Ascending aorta (tissue), 2 donors: ENCODE measurements at regions of chr6 and their contacts with region 1.

Region 1: DNA sequence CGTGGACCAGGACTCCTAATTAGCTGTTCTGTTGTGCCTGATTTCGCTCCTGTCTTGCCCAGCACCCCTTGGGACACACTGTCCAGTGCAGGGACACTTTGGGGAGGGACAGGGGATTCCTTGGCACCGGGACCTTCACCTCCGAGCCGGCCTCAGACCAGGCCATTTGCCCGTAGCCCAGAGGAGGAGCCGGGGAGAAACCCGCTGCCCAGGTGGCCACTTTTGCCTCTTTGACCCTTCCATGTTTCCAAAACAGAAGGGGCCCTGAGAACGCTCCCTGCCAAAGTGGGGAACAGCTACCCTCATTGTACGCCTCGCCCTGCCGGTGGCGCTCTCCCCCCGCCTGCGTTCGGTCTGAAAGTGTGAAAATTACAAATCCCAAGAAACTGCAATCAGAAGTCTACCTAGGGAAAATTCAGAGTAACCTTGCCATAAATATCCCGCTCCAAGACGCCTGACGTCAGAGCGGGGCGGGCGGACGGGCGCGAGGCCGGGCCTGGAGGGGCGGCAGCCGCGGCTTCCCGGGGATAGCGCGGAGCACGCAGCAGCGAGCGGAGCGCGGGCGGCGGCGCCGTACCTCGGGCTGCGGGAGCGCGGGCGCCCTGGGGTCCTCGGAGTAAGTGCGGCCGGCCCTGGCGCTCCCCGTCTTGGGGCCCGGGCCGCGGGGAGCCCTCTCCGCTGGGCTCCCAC is at the start of gene DAAM2:
- DNase-seq: peak; percentile 28 to 84
- H3K4me3 ChIP-seq: peak within 1 kb of the TSS; percentile 63 to 75
- H3K27ac ChIP-seq: peak within 1 kb of the TSS; percentile 83 to 87
- H3K4me1 ChIP-seq: peaks cover 3 to 23% of the 10 kb centered on the region in 2 donors
- H3K27me3 ChIP-seq: no peaks in the 10 kb centered on the region
- CTCF ChIP-seq: peak; percentile 2 to 47 (median 12)
- total RNA-seq, gene DAAM2: 44.0 TPM

Region 2: DNA sequence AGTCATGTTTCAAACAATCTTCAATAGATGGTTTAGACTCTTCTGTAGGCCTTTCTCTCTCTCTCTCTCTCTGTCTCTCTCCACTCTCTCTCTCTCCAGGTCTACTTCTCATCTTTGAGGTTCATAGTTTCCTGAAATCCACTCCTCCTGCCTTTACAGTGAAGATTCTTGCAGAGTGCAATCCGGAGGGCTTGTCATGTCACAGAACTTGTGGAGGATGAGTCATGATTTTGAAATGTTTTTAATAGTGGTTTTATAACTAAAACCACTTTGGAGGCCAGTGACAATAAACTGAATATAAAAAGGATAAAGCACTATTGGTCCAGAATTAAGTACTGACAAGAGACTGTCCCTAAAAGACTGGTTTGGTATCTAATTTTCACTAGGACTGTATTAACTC is 223.1 kb before region 1 on chr6:
- intact Hi-C with region 1: no loop called
- DNase-seq: no peak
- H3K4me3 ChIP-seq: no peak overlapping the region
- H3K27ac ChIP-seq: no peak overlapping the region
- H3K4me1 ChIP-seq: no peaks in the 10 kb centered on the region
- H3K27me3 ChIP-seq: no peaks in the 10 kb centered on the region
- CTCF ChIP-seq: no peak

Region 3: GRCh38 chr6:39724787-39725631 is 67.0 kb before region 1 on chr6 and contains the start of gene KIF6:
- intact Hi-C with region 1: loop called (anchors 2 kb)
- DNase-seq: peak; percentile 64 to 95
- H3K4me3 ChIP-seq: peak within 1 kb of the TSS; percentile 56 to 95
- H3K27ac ChIP-seq: peak within 1 kb of the TSS in 1 of 2 donors; percentile 27
- H3K4me1 ChIP-seq: peaks cover 0 to 4% of the 10 kb centered on the region in 2 donors
- H3K27me3 ChIP-seq: no peaks in the 10 kb centered on the region
- CTCF ChIP-seq: no peak
- total RNA-seq, gene KIF6: 0.43 TPM

Region 4: DNA sequence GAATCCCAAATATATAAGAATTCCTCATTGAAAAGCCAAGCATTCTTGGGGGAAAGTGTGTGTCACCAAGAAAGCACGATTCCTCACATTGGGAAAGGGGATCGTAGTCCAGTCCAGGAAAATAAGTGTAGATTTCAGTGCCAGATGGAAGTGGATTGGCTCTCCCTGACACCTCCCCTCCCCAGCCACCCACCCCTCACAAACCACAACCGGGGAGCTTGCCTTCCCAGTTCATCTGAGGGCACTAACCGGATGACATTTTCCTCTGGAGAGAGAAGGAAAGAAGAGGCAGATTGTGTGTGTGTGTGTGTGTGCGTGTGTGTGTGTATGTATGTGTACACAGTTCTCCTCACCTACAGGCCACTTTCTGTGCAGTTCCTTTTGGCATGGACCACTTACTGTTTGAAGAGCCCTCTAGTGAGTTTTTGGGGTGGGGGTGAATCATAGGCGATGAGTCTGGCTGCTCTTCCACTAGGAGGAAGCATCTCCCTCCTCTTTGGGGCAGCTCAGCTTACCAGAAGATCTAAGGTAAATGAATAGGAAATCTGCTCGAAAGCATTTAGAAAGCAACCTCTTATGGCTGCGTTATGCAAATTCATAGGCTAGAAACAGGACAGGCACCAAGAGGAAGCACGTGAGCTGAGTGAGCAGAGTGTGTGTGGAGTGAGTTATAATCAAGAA is 21.0 kb after region 1 on chr6:
- intact Hi-C with region 1: loop called (anchors 2 kb)
- DNase-seq: peak in 1 of 2 donors; percentile 72
- H3K4me3 ChIP-seq: peak overlapping the region in 1 of 2 donors; percentile 13
- H3K27ac ChIP-seq: peak overlapping the region; percentile 62 to 72
- H3K4me1 ChIP-seq: peaks cover 25 to 72% of the 10 kb centered on the region in 2 donors
- H3K27me3 ChIP-seq: no peaks in the 10 kb centered on the region
- CTCF ChIP-seq: peak in 1 of 3 experiments; percentile 33

Region 5: DNA sequence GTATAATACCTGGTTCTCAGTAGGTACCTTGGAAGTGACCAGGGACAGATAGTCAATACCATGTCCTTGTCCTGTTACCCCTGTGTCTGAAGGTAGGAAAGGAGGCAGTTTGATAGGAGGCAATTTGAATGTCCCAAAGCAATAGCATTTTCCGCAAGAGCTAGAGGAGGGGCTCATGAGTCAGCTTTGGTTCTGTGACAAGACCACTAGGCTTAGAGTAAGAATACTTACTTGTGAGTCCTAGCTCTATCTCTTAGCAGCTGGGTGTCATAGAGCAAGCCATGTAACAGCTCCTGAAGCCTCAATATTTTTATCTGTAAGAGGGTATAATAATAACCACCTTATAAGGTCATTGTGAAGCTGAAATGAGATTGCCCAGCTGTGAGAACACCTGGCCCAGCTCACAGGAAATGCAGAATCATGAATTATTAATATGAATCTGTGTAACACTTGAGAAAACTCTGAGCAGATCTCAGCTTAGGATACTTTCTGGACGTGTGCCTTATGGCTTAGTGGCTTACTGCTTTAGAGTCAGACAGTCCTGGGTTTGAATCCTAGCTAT is 58.8 kb after region 1 on chr6:
- intact Hi-C with region 1: loop called (anchors 2 kb)
- DNase-seq: no peak
- H3K4me3 ChIP-seq: no peak overlapping the region
- H3K27ac ChIP-seq: peak overlapping the region; percentile 61 to 68
- H3K4me1 ChIP-seq: peaks cover 19 to 60% of the 10 kb centered on the region in 2 donors
- H3K27me3 ChIP-seq: no peaks in the 10 kb centered on the region
- CTCF ChIP-seq: no peak